Left cardiac atrium (tissue), 4 donors: ENCODE measurements at regions of chr10 and their contacts with region 1.

Region 1: DNA sequence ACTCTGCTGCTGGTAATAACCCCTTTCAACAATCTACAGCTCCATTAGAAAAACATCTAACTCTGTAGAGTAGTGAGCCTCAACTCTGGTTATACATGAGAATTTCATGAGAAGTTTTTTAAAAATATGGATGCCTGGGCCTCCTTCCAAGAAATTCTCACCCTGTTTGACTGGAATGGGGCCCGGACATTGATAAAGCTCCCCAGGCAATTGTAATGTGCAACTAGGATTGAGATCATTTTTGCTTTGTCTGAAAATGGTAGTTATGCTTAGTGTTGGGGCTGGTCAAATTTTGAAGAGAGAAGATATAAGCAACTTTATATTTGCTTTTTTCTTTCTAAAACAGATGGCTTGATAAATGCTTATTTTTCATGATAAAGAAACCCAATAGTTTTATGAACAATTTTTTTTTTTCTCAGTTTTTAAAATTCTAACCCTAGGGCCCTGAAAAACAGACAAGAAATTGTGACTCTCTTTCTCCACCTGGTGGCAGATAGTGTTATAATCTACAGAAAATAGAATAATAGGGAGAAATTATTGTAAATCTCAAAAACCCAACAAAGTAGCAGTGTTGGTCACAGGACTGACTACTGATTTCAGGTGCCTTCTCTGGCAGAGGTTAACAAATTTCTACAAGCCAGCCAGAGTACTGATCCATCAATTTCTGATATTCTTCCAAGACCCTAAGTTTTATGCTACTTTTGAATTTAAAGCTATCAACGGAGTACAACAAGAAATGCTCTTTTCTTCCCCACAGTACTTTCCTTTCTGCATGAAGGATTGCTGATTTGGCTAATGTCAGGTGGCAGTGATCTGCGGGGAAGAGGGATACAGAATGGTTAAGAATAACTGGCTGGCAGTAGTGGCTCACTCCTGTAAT is 174.8 kb downstream of the DKK1 start:
- DNase-seq: no peak
- ATAC-seq: peak in 1 of 2 donors; percentile 16

Region 2: GRCh38 chr10:50988792-50989191 is 1500.1 kb before region 1 on chr10:
- intact Hi-C with region 1: loop called in 1 of 2 experiments (anchors 10 kb)
- DNase-seq: no peak
- ATAC-seq: no peak

Region 3: GRCh38 chr10:52308251-52309031 is 180.4 kb before region 1 on chr10:
- intact Hi-C with region 1: loop called (anchors 2 to 10 kb)
- DNase-seq: peak; percentile 55
- ATAC-seq: peak; percentile 83 to 94